Activated T-helper 1 cell treated with anti-CD3 and anti-CD28 coated beads, Interleukin-12 subunit alpha, Interleukin-12 subunit beta, Interleukin-2, Interleukin-4 antibody, amounts not matched to agents 30 ng/mL and 10 ng/mL and 1 ng/mL, durations not matched to agents 14 hours and 24 hours and 36 hours (primary cell): ENCODE measurements at regions of chr5 and their contacts with region 1.

Region 1: GRCh38 chr5:163505368-163506094 is at the start of gene MAT2B:
- DNase-seq: peak; percentile 95
- H3K4me3 Mint-ChIP-seq: peak within 1 kb of the TSS; percentile 92
- H3K27ac Mint-ChIP-seq: peak within 1 kb of the TSS; percentile 90
- H3K4me1 Mint-ChIP-seq: peaks cover 57% of the 10 kb centered on the region
- H3K27me3 Mint-ChIP-seq: no peaks in the 10 kb centered on the region
- total RNA-seq, gene MAT2B: 113 and 116 TPM in 2 replicates

Region 2: GRCh38 chr5:163437309-163438182 is 68.0 kb before region 1 on chr5 and contains the start of gene CCNG1:
- intact Hi-C with region 1: loop called (anchors 1 kb)
- DNase-seq: peak; percentile 87
- H3K4me3 Mint-ChIP-seq: peak within 1 kb of the TSS; percentile 92
- H3K27ac Mint-ChIP-seq: peak within 1 kb of the TSS; percentile 75
- H3K4me1 Mint-ChIP-seq: peaks cover 59% of the 10 kb centered on the region
- H3K27me3 Mint-ChIP-seq: peaks cover 6% of the 10 kb centered on the region
- total RNA-seq, gene CCNG1: 72.3 and 77.8 TPM in 2 replicates

Region 3: DNA sequence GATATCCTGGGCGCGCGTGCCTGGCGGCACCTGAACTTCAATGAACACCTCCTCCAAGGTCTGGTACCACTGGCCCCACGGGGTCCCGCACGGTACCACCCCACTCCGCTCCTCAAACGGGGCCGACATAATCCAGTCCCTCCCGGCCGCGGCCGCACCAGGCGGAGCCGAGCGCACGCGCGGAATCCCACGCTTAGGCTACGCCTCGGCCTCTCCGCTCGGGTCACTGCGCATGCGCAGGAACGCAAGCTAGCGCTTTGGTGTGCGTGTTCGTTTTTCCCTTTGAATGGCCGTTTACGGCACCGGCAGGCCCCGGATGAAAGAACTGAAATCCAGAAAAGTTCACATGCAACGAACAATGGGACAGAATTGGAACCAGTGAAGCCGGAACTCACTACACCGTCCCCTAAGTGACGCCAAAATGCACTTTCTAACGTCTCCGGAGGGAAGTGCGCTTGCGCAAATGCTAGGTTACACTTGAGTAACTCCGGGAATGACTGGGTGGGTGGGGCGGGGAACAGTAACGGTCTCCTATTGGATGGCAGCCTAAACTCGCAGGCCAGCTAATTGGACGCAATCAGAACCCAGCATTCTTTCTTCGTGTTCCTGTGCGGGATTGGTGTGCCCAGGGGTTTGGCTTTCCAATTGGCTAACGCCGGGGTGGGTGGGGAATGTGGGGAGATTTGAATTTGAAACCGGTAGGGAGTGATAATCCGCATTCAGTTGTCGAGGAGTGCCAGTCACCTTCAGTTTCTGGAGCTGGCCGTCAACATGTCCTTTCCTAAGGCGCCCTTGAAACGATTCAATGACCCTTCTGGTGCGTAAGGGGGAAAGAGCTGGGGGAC is 45.4 kb before region 1 on chr5 and contains the starts of genes HMMR and NUDCD2:
- intact Hi-C with region 1: loop called (anchors 1 kb)
- DNase-seq: peak; percentile 92
- H3K4me3 Mint-ChIP-seq: peak within 1 kb of the TSS; percentile 96
- H3K27ac Mint-ChIP-seq: peak within 1 kb of the TSS; percentile 97
- H3K4me1 Mint-ChIP-seq: peaks cover 48% of the 10 kb centered on the region
- H3K27me3 Mint-ChIP-seq: no peaks in the 10 kb centered on the region
- total RNA-seq, gene HMMR: 25.5 and 26.8 TPM in 2 replicates
- total RNA-seq, gene NUDCD2: 39.3 and 44.0 TPM in 2 replicates

Region 4: GRCh38 chr5:163473635-163474243 is 31.8 kb before region 1 on chr5:
- intact Hi-C with region 1: loop called (anchors 1 kb)
- DNase-seq: no peak
- H3K4me3 Mint-ChIP-seq: no peak overlapping the region
- H3K27ac Mint-ChIP-seq: no peak overlapping the region
- H3K4me1 Mint-ChIP-seq: peaks cover 8% of the 10 kb centered on the region
- H3K27me3 Mint-ChIP-seq: no peaks in the 10 kb centered on the region

Region 5: DNA sequence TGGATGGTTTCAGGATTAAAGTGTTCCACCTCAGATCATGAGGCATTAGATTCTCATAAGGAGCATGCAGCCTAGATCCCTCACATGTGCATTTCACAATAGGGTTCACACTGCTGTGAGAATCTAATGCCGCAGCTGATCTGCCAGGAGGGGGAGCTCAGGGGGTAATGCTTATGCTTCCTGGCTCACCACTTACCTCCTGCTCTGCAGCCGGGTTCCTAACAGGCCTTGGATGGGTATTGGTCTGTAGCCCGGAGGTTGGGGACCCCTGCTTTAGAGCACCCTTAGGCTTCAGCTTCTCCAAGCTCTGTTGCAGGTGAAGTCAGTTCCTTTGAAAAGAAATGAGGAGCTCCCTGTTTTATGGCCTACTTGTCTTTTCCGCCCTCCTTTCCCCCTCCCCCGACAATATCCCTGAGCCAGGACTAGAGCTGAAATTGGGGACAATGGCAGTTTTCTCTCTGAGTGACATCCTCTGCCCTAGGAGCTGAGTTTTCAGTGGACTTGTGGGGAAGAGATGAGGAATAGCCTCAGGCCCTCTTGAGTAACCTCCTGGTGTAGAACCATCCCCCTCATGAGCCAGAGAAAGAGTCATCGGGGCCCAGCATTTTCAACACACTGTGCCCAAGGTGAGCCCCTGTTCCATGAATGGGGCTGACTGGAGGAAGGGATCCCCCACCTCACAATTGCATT is 16.3 kb before region 1 on chr5:
- intact Hi-C with region 1: loop called (anchors 2 kb)
- DNase-seq: no peak
- H3K4me3 Mint-ChIP-seq: no peak overlapping the region
- H3K27ac Mint-ChIP-seq: no peak overlapping the region
- H3K4me1 Mint-ChIP-seq: peaks cover 5% of the 10 kb centered on the region
- H3K27me3 Mint-ChIP-seq: no peaks in the 10 kb centered on the region

Region 6: DNA sequence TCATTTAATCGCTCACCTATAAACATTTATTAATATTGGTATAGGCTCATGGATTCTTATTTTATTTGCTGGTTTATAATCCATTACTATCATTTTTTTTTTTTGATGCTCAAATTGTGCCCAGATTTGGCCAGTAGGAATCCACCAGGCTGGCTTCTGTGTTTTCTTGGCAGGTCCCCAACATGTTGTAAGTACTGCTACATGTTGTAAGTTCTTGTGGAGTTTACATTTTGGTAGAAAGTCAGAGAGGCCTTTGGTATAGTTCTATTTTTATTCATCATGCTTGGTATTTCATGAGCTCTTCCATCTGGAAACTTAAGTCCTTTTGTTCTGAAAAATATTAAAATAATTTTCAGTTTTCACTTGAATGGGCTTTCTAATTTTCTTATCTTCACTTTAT is 47.0 kb after region 1 on chr5:
- intact Hi-C with region 1: loop called (anchors 2 kb)
- DNase-seq: no peak
- H3K4me3 Mint-ChIP-seq: no peak overlapping the region
- H3K27ac Mint-ChIP-seq: no peak overlapping the region
- H3K4me1 Mint-ChIP-seq: no peaks in the 10 kb centered on the region
- H3K27me3 Mint-ChIP-seq: peaks cover 8% of the 10 kb centered on the region